ENCODE measurements at regions of chr12 and their contacts with region 1.

Region 1: GRCh38 chr12:45762185-45763110 is 32.9 kb downstream of the ARID2 start:
- DNase-seq: peak; percentile 27
- H3K4me3 ChIP-seq: no peak overlapping the region
- H3K27ac ChIP-seq: no peak overlapping the region
- H3K27me3 ChIP-seq: no peaks in the 10 kb centered on the region
- CTCF ChIP-seq: peak; percentile 86

Region 2: DNA sequence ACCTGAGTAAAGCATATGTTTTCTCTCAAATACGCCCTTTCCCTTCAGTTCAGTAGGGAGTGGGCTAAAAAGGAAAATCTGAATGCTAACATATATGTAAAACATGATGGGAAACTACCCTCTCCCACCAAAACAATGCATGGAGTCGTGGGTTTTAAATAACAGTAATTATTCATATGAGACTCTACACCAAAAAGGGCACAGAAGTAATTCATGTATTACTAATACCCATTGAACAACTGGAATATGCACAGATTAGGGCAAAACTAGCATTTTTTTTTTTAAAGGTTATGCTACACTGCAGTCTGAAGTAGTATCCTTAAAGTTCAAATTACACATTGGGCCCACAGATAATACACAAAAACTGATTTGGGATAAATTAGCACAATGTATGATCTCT is 41.1 kb before region 1 on chr12:
- CTCF ChIA-PET with region 1: no interaction called
- POLR2A ChIA-PET with region 1: no interaction called
- DNase-seq: no peak
- H3K4me3 ChIP-seq: no peak overlapping the region
- H3K27ac ChIP-seq: no peak overlapping the region
- H3K27me3 ChIP-seq: no peaks in the 10 kb centered on the region
- CTCF ChIP-seq: no peak

Region 3: GRCh38 chr12:45745861-45746277 is 16.6 kb before region 1 on chr12:
- CTCF ChIA-PET with region 1: interaction called, 44 read pairs
- POLR2A ChIA-PET with region 1: no interaction called
- DNase-seq: no peak
- H3K4me3 ChIP-seq: no peak overlapping the region
- H3K27ac ChIP-seq: no peak overlapping the region
- H3K27me3 ChIP-seq: no peaks in the 10 kb centered on the region
- CTCF ChIP-seq: peak; percentile 32

Region 4: DNA sequence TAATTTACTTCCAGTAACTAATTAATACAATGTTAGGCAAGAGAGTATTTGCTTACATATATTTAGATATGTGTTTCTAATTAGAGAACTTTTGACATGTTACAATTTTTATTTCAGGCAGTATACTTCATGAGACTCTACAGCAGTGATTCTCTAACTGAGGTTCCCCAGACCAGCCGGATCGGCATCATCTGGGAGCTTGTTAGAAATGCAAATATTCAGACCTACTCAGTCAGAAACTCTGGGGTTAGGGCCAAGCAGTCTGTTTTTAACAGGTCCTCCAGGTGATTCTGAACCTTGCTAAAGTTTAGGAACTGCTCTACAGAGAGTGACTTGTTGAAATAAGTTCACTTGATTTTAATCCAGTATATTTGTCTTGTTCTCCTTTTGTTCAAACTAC is 13.5 kb after region 1 on chr12:
- CTCF ChIA-PET with region 1: interaction called, 17 read pairs
- POLR2A ChIA-PET with region 1: no interaction called
- DNase-seq: no peak
- H3K4me3 ChIP-seq: no peak overlapping the region
- H3K27ac ChIP-seq: no peak overlapping the region
- H3K27me3 ChIP-seq: no peaks in the 10 kb centered on the region
- CTCF ChIP-seq: no peak

Region 5: GRCh38 chr12:46005151-46005797 is 242.8 kb after region 1 on chr12:
- CTCF ChIA-PET with region 1: interaction called, 22 read pairs
- POLR2A ChIA-PET with region 1: no interaction called
- DNase-seq: no peak
- H3K4me3 ChIP-seq: no peak overlapping the region
- H3K27ac ChIP-seq: no peak overlapping the region
- H3K27me3 ChIP-seq: peaks cover 3% of the 10 kb centered on the region
- CTCF ChIP-seq: peak; percentile 48

Region 6: GRCh38 chr12:46071769-46072624 is 309.5 kb after region 1 on chr12:
- CTCF ChIA-PET with region 1: interaction called, 10 read pairs
- POLR2A ChIA-PET with region 1: no interaction called
- DNase-seq: peak; percentile 30
- H3K4me3 ChIP-seq: no peak overlapping the region
- H3K27ac ChIP-seq: no peak overlapping the region
- H3K27me3 ChIP-seq: no peaks in the 10 kb centered on the region
- CTCF ChIP-seq: peak; percentile 100

Measured in AG04450 (cell line).